GM10248 (cell line): ENCODE measurements at regions of chr2 and their contacts with region 1.

Region 1: GRCh38 chr2:181953881-181954537 is 31.6 kb upstream of the PPP1R1C start:
- DNase-seq: peak; percentile 76
- CTCF ChIP-seq: peak; percentile 76

Region 2: DNA sequence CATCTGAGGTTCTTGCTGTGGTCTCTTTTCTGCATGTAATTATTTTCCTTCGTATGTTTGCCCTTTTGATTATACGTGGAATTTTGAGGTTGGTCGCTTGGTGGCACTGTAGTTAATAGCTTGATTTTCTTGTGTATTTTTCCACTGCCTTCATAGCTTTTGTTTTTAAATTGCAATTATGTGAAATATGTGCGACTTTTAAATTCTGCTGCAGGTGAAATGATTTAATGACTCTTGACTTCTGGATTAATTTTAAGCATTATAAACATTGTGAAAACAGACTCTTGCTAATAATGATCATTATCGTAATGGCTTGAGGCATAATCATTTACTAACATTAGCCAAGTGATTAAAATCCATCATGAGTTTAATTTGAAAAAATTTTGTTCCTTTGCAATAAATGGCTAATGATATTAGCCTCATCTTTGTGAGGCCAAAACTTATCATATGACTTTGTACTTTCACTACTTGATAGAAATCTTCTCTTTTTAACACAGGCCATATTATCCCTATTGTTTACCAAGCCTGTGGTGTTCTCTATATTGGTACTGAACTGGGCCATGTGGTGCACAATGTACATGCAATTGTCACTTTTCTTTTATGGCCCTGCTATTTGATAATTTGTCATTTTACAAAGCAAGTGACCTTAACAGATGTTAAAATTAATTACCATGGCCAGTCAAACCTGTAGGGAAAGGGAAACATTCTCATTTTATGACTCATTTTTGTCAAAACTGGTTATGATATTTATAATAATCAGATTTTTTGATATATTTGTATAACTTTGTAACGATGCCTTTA is 210.9 kb before region 1 on chr2:
- CTCF ChIA-PET with region 1: interaction called, 30 read pairs
- POLR2A ChIA-PET with region 1: no interaction called
- DNase-seq: peak; percentile 37
- CTCF ChIP-seq: peak; percentile 59

Region 3: GRCh38 chr2:181937473-181937872 is 16.5 kb before region 1 on chr2:
- CTCF ChIA-PET with region 1: interaction called, 17 read pairs
- POLR2A ChIA-PET with region 1: no interaction called
- DNase-seq: no peak
- CTCF ChIP-seq: no peak

Region 4: GRCh38 chr2:182625814-182626213 is 671.8 kb after region 1 on chr2:
- CTCF ChIA-PET with region 1: no interaction called
- POLR2A ChIA-PET with region 1: no interaction called
- DNase-seq: no peak
- CTCF ChIP-seq: no peak